ENCODE measurements at regions of chr12 and their contacts with region 1.

Region 1: GRCh38 chr12:108664338-108665258 is 30.9 kb upstream of the SELPLG start:
- DNase-seq: peak; percentile 86
- ATAC-seq: peak; percentile 95
- H3K4me3 ChIP-seq: peak overlapping the region in 4 of 5 experiments; percentile 16 to 57 (median 30)
- H3K4me3 Mint-ChIP-seq: peak overlapping the region; percentile 66
- H3K27ac ChIP-seq: peak overlapping the region; percentile 62 to 77
- H3K27ac Mint-ChIP-seq: peak overlapping the region; percentile 73
- H3K4me1 ChIP-seq: peaks cover 52 to 53% of the 10 kb centered on the region in 2 donors
- H3K4me1 Mint-ChIP-seq: peaks cover 56% of the 10 kb centered on the region
- H3K27me3 ChIP-seq: no peaks in the 10 kb centered on the region
- H3K27me3 Mint-ChIP-seq: no peaks in the 10 kb centered on the region
- CTCF ChIP-seq: peak; percentile 90

Region 2: GRCh38 chr12:108562348-108563135 is 102.1 kb before region 1 on chr12 and contains the start of gene ISCU:
- CTCF ChIA-PET with region 1: interaction called, 172 read pairs
- POLR2A ChIA-PET with region 1: interaction called, 4 read pairs
- intact Hi-C with region 1: loop called (anchors 1 kb)
- DNase-seq: peak; percentile 99
- ATAC-seq: peak; percentile 73
- H3K4me3 ChIP-seq: peak within 1 kb of the TSS; percentile 84 to 99 (median 98)
- H3K4me3 Mint-ChIP-seq: peak within 1 kb of the TSS; percentile 100
- H3K27ac ChIP-seq: peak within 1 kb of the TSS; percentile 94 to 97
- H3K27ac Mint-ChIP-seq: peak within 1 kb of the TSS; percentile 100
- H3K4me1 ChIP-seq: peaks cover 53 to 61% of the 10 kb centered on the region in 2 donors
- H3K4me1 Mint-ChIP-seq: peaks cover 72% of the 10 kb centered on the region
- H3K27me3 ChIP-seq: no peaks in the 10 kb centered on the region
- H3K27me3 Mint-ChIP-seq: no peaks in the 10 kb centered on the region
- CTCF ChIP-seq: no peak
- total RNA-seq, gene ISCU: 190 and 209 TPM in 2 replicates

Region 3: GRCh38 chr12:108633534-108634248 is 30.9 kb before region 1 on chr12 and contains the start of gene SELPLG:
- CTCF ChIA-PET with region 1: interaction called, 132 read pairs
- POLR2A ChIA-PET with region 1: interaction called, 10 read pairs
- intact Hi-C with region 1: loop called (anchors 1 kb)
- DNase-seq: peak; percentile 98
- ATAC-seq: peak; percentile 75
- H3K4me3 ChIP-seq: peak within 1 kb of the TSS; percentile 62 to 87 (median 78)
- H3K4me3 Mint-ChIP-seq: peak within 1 kb of the TSS; percentile 99
- H3K27ac ChIP-seq: peak within 1 kb of the TSS; percentile 92 to 95
- H3K27ac Mint-ChIP-seq: peak within 1 kb of the TSS; percentile 100
- H3K4me1 ChIP-seq: peaks cover 78 to 88% of the 10 kb centered on the region in 2 donors
- H3K4me1 Mint-ChIP-seq: peaks cover 89% of the 10 kb centered on the region
- H3K27me3 ChIP-seq: no peaks in the 10 kb centered on the region
- H3K27me3 Mint-ChIP-seq: no peaks in the 10 kb centered on the region
- CTCF ChIP-seq: peak; percentile 41
- total RNA-seq, gene SELPLG: 6.1 and 6.2 TPM in 2 replicates

Region 4: DNA sequence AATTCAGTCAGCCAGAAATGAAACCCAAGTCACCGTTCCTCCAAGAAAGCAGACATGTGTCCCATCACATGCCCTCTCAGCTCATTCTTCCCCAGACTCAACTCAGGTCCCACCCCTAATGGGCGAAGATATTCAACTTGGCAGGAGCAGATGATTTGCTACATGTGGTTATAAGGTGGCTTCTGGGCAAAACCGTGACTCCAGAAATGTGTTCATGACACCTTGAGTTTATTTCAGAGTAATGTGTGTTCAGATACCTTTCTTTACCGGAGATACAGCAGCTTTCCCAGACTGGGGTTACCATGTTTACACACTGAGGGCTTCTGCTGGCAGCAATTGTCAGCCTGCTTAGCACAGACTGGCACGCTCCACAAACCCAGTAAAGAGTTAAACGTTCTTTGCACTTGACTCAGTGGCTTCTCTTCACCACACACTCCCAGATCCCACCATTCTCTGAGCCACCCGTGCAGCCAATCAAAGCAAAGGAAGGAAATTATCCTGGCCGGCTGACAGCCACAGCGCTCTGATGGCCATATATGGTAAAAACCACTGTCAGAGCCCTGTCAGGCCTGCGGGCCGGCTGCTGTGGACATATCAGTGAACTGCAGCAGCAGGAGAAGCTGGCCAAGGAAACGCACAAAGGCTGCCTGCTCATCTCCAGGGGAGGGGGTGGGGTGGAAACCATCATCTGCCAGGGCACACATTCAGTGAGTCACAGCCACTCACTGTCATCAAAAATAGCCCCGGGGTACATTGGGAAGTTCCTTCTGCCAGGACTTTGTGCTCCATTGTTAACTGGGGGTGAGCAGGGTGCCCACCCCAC is 26.8 kb after region 1 on chr12:
- CTCF ChIA-PET with region 1: interaction called, 23 read pairs
- POLR2A ChIA-PET with region 1: interaction called, 4 read pairs
- intact Hi-C with region 1: loop called (anchors 2 kb)
- DNase-seq: peak; percentile 34
- ATAC-seq: peak; percentile 83
- H3K4me3 ChIP-seq: peak overlapping the region in 4 of 5 experiments; percentile 4 to 38 (median 31)
- H3K4me3 Mint-ChIP-seq: peak overlapping the region; percentile 82
- H3K27ac ChIP-seq: peak overlapping the region in 1 of 2 donors; percentile 40
- H3K27ac Mint-ChIP-seq: peak overlapping the region; percentile 74
- H3K4me1 ChIP-seq: peaks cover 32 to 35% of the 10 kb centered on the region in 2 donors
- H3K4me1 Mint-ChIP-seq: peaks cover 50% of the 10 kb centered on the region
- H3K27me3 ChIP-seq: no peaks in the 10 kb centered on the region
- H3K27me3 Mint-ChIP-seq: no peaks in the 10 kb centered on the region
- CTCF ChIP-seq: no peak

Region 5: GRCh38 chr12:108803428-108804105 is 139.0 kb after region 1 on chr12:
- CTCF ChIA-PET with region 1: interaction called, 312 read pairs
- POLR2A ChIA-PET with region 1: no interaction called
- intact Hi-C with region 1: loop called (anchors 1 kb)
- DNase-seq: peak; percentile 84
- ATAC-seq: peak; percentile 92
- H3K4me3 ChIP-seq: no peak overlapping the region
- H3K4me3 Mint-ChIP-seq: no peak overlapping the region
- H3K27ac ChIP-seq: no peak overlapping the region
- H3K27ac Mint-ChIP-seq: peak overlapping the region; percentile 71
- H3K4me1 ChIP-seq: peaks cover 8 to 11% of the 10 kb centered on the region in 2 donors
- H3K4me1 Mint-ChIP-seq: peaks cover 19% of the 10 kb centered on the region
- H3K27me3 ChIP-seq: no peaks in the 10 kb centered on the region
- H3K27me3 Mint-ChIP-seq: no peaks in the 10 kb centered on the region
- CTCF ChIP-seq: peak; percentile 98

Region 6: DNA sequence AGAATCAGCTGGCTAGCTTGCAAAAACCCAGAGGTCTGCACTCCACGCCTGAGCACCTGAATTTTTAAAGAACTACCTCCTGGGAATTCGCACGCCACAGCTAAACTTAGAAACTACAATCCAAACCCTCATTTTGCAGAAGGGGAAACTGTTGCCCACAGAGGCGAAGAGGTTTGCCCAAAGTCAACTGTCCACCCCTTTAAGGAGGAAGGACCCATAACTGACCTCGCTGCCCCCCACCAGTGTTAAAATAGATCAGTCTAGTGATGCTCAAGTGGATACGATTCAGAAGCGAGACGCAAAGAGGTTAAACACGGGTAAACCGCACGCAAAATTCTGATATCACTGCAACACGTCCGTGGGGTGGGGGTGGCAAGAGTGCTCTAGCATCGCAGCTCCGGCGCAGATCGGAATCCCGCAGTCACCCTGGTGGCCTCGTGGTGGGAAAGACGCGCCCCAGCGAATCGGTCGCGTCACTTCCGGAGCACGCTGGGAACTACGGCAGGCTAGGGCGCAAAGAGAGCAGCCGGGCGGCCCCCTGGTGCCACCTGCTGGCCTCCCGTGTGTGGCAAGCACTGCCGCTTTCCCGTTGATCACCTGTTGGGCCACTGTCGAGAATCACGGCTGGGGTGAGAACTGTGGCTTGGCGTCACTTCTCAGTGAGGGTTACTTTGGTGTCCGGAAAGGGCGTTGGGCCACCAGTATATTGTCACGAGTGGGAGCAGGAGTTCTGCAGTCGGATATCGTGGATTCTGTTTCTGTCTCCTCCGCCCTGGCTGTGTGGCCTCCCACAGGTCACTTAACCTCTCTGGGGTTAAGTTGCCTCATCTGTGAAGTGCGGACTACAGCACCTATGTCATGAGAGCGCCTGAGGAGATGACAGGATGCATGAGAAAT is 428.7 kb after region 1 on chr12 and contains the start of gene ALKBH2:
- CTCF ChIA-PET with region 1: interaction called, 11 read pairs
- POLR2A ChIA-PET with region 1: no interaction called
- intact Hi-C with region 1: no loop called
- DNase-seq: peak; percentile 96
- ATAC-seq: peak; percentile 70
- H3K4me3 ChIP-seq: peak within 1 kb of the TSS; percentile 64 to 98 (median 85)
- H3K4me3 Mint-ChIP-seq: peak within 1 kb of the TSS; percentile 95
- H3K27ac ChIP-seq: peak within 1 kb of the TSS; percentile 58 to 78
- H3K27ac Mint-ChIP-seq: peak within 1 kb of the TSS; percentile 89
- H3K4me1 ChIP-seq: peaks cover 24 to 28% of the 10 kb centered on the region in 2 donors
- H3K4me1 Mint-ChIP-seq: peaks cover 34% of the 10 kb centered on the region
- H3K27me3 ChIP-seq: no peaks in the 10 kb centered on the region
- H3K27me3 Mint-ChIP-seq: no peaks in the 10 kb centered on the region
- CTCF ChIP-seq: peak; percentile 97
- total RNA-seq, gene ALKBH2: 14.5 and 14.6 TPM in 2 replicates